Psoas muscle (tissue), 8 donors: ENCODE measurements at regions of chr1 and their contacts with region 1.

Region 1: GRCh38 chr1:66867501-66867900 is 57.2 kb downstream of the DNAI4 start:
- DNase-seq: no peak
- ATAC-seq: no peak
- H3K4me3 ChIP-seq: no peak overlapping the region
- H3K27ac ChIP-seq: no peak overlapping the region
- H3K4me1 ChIP-seq: no peaks in the 10 kb centered on the region
- H3K27me3 ChIP-seq: no peaks in the 10 kb centered on the region
- CTCF ChIP-seq: no peak

Region 2: GRCh38 chr1:66685670-66686069 is 181.8 kb before region 1 on chr1:
- intact Hi-C with region 1: no loop called
- DNase-seq: no peak
- ATAC-seq: no peak
- H3K4me3 ChIP-seq: no peak overlapping the region
- H3K27ac ChIP-seq: no peak overlapping the region
- H3K4me1 ChIP-seq: no peaks in the 10 kb centered on the region
- H3K27me3 ChIP-seq: no peaks in the 10 kb centered on the region
- CTCF ChIP-seq: no peak

Region 3: DNA sequence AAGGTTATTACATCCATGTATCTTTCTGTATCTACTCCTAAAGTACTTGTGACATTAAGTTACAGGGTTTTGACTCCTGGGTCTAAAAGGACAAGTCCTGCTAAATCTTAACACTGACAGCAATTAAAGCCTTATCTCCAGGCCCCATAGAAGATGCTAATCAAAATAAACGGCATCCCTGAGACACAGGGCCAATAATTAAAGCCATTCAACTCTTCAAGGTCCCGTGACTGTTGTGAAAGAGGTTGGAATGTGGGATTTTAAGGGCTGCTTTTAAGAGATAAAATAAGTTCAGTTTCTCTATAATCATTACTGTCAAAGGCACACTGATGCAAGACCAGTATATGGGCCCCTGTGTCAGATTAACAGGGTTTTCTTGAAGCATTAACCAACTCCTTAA is 48.8 kb after region 1 on chr1:
- intact Hi-C with region 1: loop called in 1 of 2 experiments (anchors 2 kb)
- DNase-seq: no peak
- ATAC-seq: no peak
- H3K4me3 ChIP-seq: no peak overlapping the region
- H3K27ac ChIP-seq: no peak overlapping the region
- H3K4me1 ChIP-seq: no peaks in the 10 kb centered on the region
- H3K27me3 ChIP-seq: no peaks in the 10 kb centered on the region
- CTCF ChIP-seq: no peak